ENCODE measurements at regions of chr10 and their contacts with region 1.

Region 1: GRCh38 chr10:61903221-61903927 is 1.9 kb downstream of the ARID5B start:
- DNase-seq: peak; percentile 76
- ATAC-seq: peak; percentile 76

Region 2: DNA sequence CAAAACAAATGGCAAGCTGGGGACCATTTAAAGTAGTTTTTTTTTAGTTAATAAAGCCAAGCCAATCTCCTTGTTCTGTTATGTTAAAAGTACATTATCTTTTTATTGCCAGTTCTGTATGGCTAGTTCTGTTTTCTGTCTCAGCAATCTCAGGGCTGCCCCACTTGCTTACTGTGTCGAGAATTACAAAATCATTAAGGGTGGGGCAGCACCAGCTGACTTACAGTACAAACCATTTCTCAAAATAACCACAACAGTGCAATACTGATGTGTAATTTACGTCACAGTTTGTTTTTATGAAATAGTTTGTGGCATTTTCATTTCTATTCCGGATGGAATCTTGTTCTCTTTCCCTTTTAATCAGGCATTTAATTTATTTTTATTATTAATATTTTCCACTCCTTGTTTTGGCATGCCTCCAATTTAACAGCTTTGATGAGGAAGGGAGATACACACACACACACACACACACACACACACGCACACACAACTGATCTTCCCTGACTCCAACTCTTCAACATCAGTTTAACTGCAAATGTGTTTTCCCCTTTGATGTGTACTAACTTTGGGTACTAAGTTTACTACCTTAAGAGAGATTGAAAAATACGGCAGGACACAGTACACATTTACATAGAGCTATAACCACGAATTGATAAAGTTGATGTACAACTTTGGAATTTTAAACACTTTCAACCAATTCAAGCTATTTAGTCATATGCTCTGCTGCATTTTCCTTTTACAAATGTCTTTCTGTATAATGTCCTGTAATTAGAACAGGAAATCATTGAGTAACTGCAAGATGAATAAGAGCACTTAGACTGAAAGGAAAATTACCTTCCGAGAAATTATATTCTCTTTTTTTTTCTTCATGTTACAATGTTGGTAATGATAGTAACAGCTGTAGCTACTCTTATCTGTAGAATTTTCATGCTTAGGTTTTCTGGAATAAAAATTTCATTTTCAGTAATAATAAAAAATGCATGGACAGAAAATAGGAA is 89.6 kb after region 1 on chr10:
- intact Hi-C with region 1: loop called (anchors 10 kb)
- DNase-seq: peak; percentile 46
- ATAC-seq: peak; percentile 94